ENCODE measurements at regions of chr6 and their contacts with region 1.

Region 1: GRCh38 chr6:4018172-4018905 is 60.6 kb downstream of the FAM217A start:
- DNase-seq: peak; percentile 84
- ATAC-seq: peak; percentile 82
- H3K4me3 ChIP-seq: peak overlapping the region; percentile 77 to 83
- H3K27ac ChIP-seq: peak overlapping the region; percentile 99
- H3K4me1 ChIP-seq: peaks cover 29% of the 10 kb centered on the region
- H3K27me3 ChIP-seq: no peaks in the 10 kb centered on the region
- CTCF ChIP-seq: peak; percentile 54

Region 2: GRCh38 chr6:3707024-3707423 is 311.3 kb before region 1 on chr6:
- CTCF ChIA-PET with region 1: no interaction called
- POLR2A ChIA-PET with region 1: no interaction called
- in situ Hi-C with region 1: no loop called
- intact Hi-C with region 1: no loop called
- DNase-seq: no peak
- ATAC-seq: no peak
- H3K4me3 ChIP-seq: no peak overlapping the region
- H3K27ac ChIP-seq: no peak overlapping the region
- H3K4me1 ChIP-seq: no peaks in the 10 kb centered on the region
- H3K27me3 ChIP-seq: no peaks in the 10 kb centered on the region; the same call in 1 of the 2 replicates
- CTCF ChIP-seq: no peak

Region 3: GRCh38 chr6:3732345-3733141 is 285.8 kb before region 1 on chr6:
- CTCF ChIA-PET with region 1: interaction called, 14 read pairs
- POLR2A ChIA-PET with region 1: no interaction called
- in situ Hi-C with region 1: no loop called
- intact Hi-C with region 1: no loop called
- DNase-seq: no peak
- ATAC-seq: peak; percentile 90
- H3K4me3 ChIP-seq: no peak overlapping the region
- H3K27ac ChIP-seq: no peak overlapping the region
- H3K4me1 ChIP-seq: no peaks in the 10 kb centered on the region
- H3K27me3 ChIP-seq: no peaks in the 10 kb centered on the region
- CTCF ChIP-seq: peak; percentile 96

Region 4: DNA sequence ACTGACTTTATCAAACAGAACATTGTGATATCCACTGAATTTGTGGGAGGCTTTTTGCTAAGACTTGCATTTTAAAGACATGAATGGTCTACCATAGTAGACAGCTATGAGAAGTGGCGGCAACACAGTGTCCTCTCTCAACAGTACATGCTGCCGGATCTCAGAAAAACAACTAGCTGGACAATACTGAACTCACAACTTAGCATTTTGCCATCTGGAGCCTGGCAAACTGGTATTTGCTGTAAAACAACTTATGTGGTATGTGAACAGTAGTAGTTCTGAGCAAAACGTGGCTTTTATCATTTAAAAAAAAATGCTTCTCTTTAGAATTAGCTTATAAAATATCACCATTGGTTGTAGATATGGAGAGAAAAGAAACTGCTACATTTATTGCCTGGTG is 263.6 kb before region 1 on chr6:
- CTCF ChIA-PET with region 1: no interaction called
- POLR2A ChIA-PET with region 1: interaction called, 17 read pairs
- in situ Hi-C with region 1: no loop called
- intact Hi-C with region 1: no loop called
- DNase-seq: no peak
- ATAC-seq: no peak
- H3K4me3 ChIP-seq: no peak overlapping the region
- H3K27ac ChIP-seq: no peak overlapping the region
- H3K4me1 ChIP-seq: peaks cover 4% of the 10 kb centered on the region; the same call in 1 of the 2 replicates
- H3K27me3 ChIP-seq: no peaks in the 10 kb centered on the region
- CTCF ChIP-seq: no peak

Region 5: GRCh38 chr6:3813150-3813780 is 205.1 kb before region 1 on chr6:
- CTCF ChIA-PET with region 1: no interaction called
- POLR2A ChIA-PET with region 1: interaction called, 12 read pairs
- in situ Hi-C with region 1: no loop called
- intact Hi-C with region 1: no loop called
- DNase-seq: no peak
- ATAC-seq: peak; percentile 64
- H3K4me3 ChIP-seq: no peak overlapping the region
- H3K27ac ChIP-seq: peak overlapping the region; percentile 53; the same call in 1 of the 2 replicates
- H3K4me1 ChIP-seq: peaks cover 18% of the 10 kb centered on the region
- H3K27me3 ChIP-seq: no peaks in the 10 kb centered on the region
- CTCF ChIP-seq: no peak

Region 6: DNA sequence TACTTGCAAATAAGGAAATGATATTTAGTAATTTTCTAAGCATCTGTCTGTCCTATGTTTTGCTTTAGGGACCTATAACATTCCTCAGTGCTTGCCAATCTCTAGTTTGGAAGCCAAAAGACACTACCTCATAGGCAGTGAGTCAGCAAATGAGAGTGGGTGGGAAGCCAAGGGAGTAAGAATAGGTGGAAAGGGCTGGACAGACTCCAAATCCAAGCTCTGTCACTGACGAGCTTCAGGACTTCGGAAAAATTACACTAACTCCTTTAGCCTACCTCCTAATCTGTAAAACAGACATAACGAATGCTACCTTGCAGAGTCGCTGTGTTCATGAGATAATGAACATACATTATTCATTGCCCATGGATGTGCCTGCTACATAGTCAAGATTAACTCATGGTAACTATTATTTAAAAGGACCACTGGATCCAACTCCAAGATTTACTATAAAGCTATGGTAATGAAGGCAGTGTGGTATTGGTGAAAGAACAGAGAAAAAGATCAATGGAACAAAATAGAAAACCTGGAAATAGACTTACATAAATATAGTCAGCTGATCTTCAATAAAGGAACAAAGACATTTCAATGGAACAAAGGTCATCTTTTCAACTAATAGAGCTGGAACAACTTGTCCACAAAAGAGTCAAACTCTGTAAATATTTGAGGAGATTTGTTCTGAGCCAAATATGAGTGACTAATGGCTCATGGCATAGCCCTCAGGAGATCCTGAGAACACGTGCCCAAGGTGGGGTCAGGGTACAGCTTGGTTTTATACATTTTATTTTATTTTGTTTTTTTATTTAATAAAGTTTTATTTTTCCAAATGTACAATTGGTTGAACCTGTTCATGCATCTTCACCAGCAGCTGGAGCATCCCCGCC is 105.0 kb before region 1 on chr6:
- CTCF ChIA-PET with region 1: no interaction called
- POLR2A ChIA-PET with region 1: no interaction called
- in situ Hi-C with region 1: no loop called
- intact Hi-C with region 1: no loop called
- DNase-seq: peak; percentile 90
- ATAC-seq: peak; percentile 93
- H3K4me3 ChIP-seq: no peak overlapping the region
- H3K27ac ChIP-seq: peak overlapping the region; percentile 81
- H3K4me1 ChIP-seq: peaks cover 31% of the 10 kb centered on the region
- H3K27me3 ChIP-seq: no peaks in the 10 kb centered on the region
- CTCF ChIP-seq: no peak

Region 7: DNA sequence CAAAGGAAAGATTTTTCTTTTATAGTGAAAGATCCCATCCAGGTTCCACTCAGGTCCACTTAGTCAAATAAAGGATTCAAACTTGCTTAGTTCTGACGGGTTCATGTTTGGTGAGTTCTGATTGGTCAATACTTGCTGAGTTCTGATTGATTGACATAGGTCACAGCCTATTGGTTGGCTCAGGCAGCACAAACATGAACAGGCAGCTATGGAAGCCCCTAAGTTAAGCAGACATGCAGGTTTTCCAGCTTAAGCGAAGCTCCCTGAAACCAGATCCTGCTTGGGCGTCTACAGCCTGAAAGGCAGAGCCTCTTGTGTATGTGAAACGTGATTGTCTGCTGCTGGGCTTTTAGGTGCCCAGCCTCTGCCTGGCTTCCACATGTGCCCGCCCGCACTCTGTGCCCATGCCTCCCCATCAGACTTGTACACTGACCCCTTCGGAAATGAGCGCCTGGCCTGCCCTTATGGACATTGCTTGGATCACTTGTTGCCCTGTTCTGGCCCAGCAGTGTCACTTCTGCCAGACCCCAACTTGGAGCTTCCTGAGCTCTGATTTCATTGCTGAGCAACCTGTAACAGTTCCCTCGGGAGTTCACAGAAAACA is 162.4 kb after region 1 on chr6:
- CTCF ChIA-PET with region 1: no interaction called
- POLR2A ChIA-PET with region 1: no interaction called
- in situ Hi-C with region 1: no loop called
- intact Hi-C with region 1: no loop called
- DNase-seq: no peak
- ATAC-seq: no peak
- H3K4me3 ChIP-seq: no peak overlapping the region
- H3K27ac ChIP-seq: no peak overlapping the region
- H3K4me1 ChIP-seq: no peaks in the 10 kb centered on the region
- H3K27me3 ChIP-seq: no peaks in the 10 kb centered on the region; the same call in 1 of the 2 replicates
- CTCF ChIP-seq: no peak

Measured in Panc1 (cell line).